ENCODE measurements at regions of chr12 and their contacts with region 1.

Region 1: GRCh38 chr12:91109148-91109564 is 2.1 kb downstream of the LUM start:
- DNase-seq: peak; percentile 27
- ATAC-seq: peak; percentile 93
- H3K4me3 ChIP-seq: no peak overlapping the region
- H3K27ac ChIP-seq: no peak overlapping the region
- H3K4me1 ChIP-seq: no peaks in the 10 kb centered on the region
- H3K27me3 ChIP-seq: no peaks in the 10 kb centered on the region
- CTCF ChIP-seq: peak; percentile 44 to 81 (median 67); a peak in 5 of 6 replicates
- POLR2A ChIP-seq: no peak
- RAD21 ChIP-seq: peak; percentile 53

Region 2: GRCh38 chr12:90978117-90978770 is 130.9 kb before region 1 on chr12:
- CTCF ChIA-PET with region 1: interaction called, 3 read pairs
- POLR2A ChIA-PET with region 1: no interaction called
- RAD21 ChIA-PET with region 1: no interaction called
- intact Hi-C with region 1: loop called (anchors 2 kb)
- DNase-seq: peak; percentile 43
- ATAC-seq: peak; percentile 92
- H3K4me3 ChIP-seq: no peak overlapping the region
- H3K27ac ChIP-seq: no peak overlapping the region
- H3K4me1 ChIP-seq: peaks cover 0 to 9% of the 10 kb centered on the region in 2 experiments; a peak in 1 of 4 replicates
- H3K27me3 ChIP-seq: no peaks in the 10 kb centered on the region
- CTCF ChIP-seq: peak; percentile 55 to 82 (median 75)
- POLR2A ChIP-seq: no peak
- RAD21 ChIP-seq: peak; percentile 86

Region 3: DNA sequence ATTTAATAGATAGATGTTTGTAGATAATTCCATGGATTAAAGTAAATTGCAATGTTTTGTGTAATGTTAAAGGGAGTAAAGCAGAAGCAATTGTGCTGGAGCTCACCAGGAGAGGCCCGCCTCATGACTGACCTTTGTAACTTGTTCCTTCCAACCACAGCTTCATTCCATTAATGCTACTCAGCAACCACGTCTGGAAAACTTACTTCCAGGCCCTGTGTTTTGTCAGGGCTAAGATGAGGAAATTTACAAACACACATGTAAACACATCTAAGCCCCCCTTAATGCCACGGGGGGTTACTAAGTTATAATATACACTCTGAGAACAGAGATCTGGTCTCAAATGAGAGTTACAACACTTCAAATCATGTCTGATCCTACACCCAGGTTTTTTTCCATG is 10.2 kb before region 1 on chr12:
- CTCF ChIA-PET with region 1: interaction called, 12 read pairs
- POLR2A ChIA-PET with region 1: no interaction called
- RAD21 ChIA-PET with region 1: no interaction called
- intact Hi-C with region 1: no loop called
- DNase-seq: peak; percentile 24
- ATAC-seq: peak; percentile 76
- H3K4me3 ChIP-seq: no peak overlapping the region
- H3K27ac ChIP-seq: no peak overlapping the region
- H3K4me1 ChIP-seq: peaks cover 4 to 14% of the 10 kb centered on the region in 2 experiments; a peak in 3 of 4 replicates
- H3K27me3 ChIP-seq: no peaks in the 10 kb centered on the region
- CTCF ChIP-seq: no peak
- POLR2A ChIP-seq: no peak
- RAD21 ChIP-seq: no peak

Region 4: GRCh38 chr12:91326058-91327027 is 217.2 kb after region 1 on chr12:
- CTCF ChIA-PET with region 1: interaction called, 3 read pairs
- POLR2A ChIA-PET with region 1: no interaction called
- RAD21 ChIA-PET with region 1: no interaction called
- intact Hi-C with region 1: loop called (anchors 10 kb)
- DNase-seq: peak; percentile 19
- ATAC-seq: peak; percentile 55
- H3K4me3 ChIP-seq: no peak overlapping the region
- H3K27ac ChIP-seq: no peak overlapping the region
- H3K4me1 ChIP-seq: no peaks in the 10 kb centered on the region
- H3K27me3 ChIP-seq: no peaks in the 10 kb centered on the region
- CTCF ChIP-seq: peak; percentile 60 to 70 (median 66); a peak in 5 of 6 replicates
- POLR2A ChIP-seq: no peak
- RAD21 ChIP-seq: peak; percentile 64

Measured in HCT116 (cell line).